Uterus (tissue), 4 donors: ENCODE measurements at regions of chr11 and their contacts with region 1.

Region 1: GRCh38 chr11:130434521-130435223 is 6.3 kb upstream of the ADAMTS8 start:
- DNase-seq: peak; percentile 73 to 78
- H3K4me3 ChIP-seq: peak overlapping the region; percentile 25 to 49
- H3K27ac ChIP-seq: peak overlapping the region; percentile 65 to 68
- H3K4me1 ChIP-seq: no peaks in the 10 kb centered on the region
- H3K27me3 ChIP-seq: no peaks in the 10 kb centered on the region
- CTCF ChIP-seq: peak; percentile 74 to 86 (median 84)
- POLR2A ChIP-seq: no peak

Region 2: GRCh38 chr11:130861902-130862860 is 427.5 kb after region 1 on chr11:
- intact Hi-C with region 1: loop called (anchors 1 kb)
- DNase-seq: peak; percentile 89 to 93
- H3K4me3 ChIP-seq: no peak overlapping the region
- H3K27ac ChIP-seq: no peak overlapping the region
- H3K4me1 ChIP-seq: no peaks in the 10 kb centered on the region
- H3K27me3 ChIP-seq: no peaks in the 10 kb centered on the region
- CTCF ChIP-seq: peak; percentile 99 to 100 (median 100)
- POLR2A ChIP-seq: peak in 1 of 2 donors; percentile 36